ENCODE measurements at regions of chr2 and their contacts with region 1.

Region 1: GRCh38 chr2:172442072-172442895 is 14.9 kb downstream of the ITGA6 start:
- DNase-seq: no peak
- ATAC-seq: peak; percentile 34
- H3K4me3 Mint-ChIP-seq: peak overlapping the region; percentile 57
- H3K27ac Mint-ChIP-seq: peak overlapping the region; percentile 68
- H3K4me1 Mint-ChIP-seq: peaks cover 44% of the 10 kb centered on the region
- H3K27me3 Mint-ChIP-seq: no peaks in the 10 kb centered on the region

Region 2: GRCh38 chr2:172427256-172427989 is 14.9 kb before region 1 on chr2 and contains the start of gene ITGA6:
- POLR2A ChIA-PET with region 1: interaction called, 11 read pairs
- DNase-seq: peak; percentile 80
- ATAC-seq: peak; percentile 68
- H3K4me3 Mint-ChIP-seq: peak within 1 kb of the TSS; percentile 85
- H3K27ac Mint-ChIP-seq: peak within 1 kb of the TSS; percentile 53
- H3K4me1 Mint-ChIP-seq: peaks cover 29% of the 10 kb centered on the region
- H3K27me3 Mint-ChIP-seq: peaks cover 24% of the 10 kb centered on the region
- total RNA-seq, gene ITGA6: 22.8 to 26.8 TPM

Region 3: DNA sequence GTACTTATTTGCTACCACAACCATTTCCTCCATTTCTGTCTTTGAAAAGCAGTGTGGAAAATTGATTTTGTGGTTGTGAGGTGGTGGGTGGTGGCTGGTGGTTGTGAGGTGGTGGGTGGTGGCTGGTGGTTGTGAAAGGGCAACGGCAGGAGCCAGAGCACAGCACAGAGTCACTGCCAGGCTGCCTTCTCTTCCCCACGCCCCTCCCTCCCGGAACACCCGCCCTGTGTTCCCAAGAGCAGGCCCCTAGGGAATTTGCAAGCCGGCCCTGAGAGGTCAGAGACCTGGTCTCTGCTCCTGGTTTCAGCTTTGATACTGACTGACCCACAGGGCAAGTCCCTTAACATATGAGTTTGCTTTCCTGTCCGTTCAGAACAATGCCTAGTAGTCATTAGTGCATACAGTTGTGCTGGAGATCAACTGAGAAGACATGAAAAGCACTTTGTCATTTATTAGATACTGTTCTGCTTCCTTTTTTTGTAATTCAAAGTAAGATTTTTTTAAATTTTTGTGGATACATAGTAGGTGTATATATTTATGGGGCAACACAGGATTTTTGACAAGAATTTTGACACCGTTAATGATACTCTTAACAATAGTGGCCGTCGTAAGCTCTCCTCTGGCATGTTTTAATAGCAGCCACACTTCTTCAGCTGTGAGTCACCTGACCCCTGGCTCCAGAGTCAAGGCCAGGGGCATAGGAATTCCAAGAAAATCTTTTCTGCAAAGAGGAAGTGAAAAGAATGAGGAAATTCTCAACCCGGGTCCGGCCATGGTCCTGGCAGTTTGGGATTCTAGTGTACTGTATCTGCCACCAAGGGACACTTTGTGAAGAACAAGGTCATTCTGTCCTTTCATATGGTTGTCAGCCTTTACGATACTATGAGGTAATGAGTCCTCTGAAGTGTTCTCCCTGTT is 38.3 kb after region 1 on chr2:
- POLR2A ChIA-PET with region 1: no interaction called
- DNase-seq: no peak
- ATAC-seq: peak; percentile 39
- H3K4me3 Mint-ChIP-seq: no peak overlapping the region
- H3K27ac Mint-ChIP-seq: no peak overlapping the region
- H3K4me1 Mint-ChIP-seq: peaks cover 15% of the 10 kb centered on the region
- H3K27me3 Mint-ChIP-seq: no peaks in the 10 kb centered on the region